ENCODE measurements at regions of chr16 and their contacts with region 1.

Region 1: DNA sequence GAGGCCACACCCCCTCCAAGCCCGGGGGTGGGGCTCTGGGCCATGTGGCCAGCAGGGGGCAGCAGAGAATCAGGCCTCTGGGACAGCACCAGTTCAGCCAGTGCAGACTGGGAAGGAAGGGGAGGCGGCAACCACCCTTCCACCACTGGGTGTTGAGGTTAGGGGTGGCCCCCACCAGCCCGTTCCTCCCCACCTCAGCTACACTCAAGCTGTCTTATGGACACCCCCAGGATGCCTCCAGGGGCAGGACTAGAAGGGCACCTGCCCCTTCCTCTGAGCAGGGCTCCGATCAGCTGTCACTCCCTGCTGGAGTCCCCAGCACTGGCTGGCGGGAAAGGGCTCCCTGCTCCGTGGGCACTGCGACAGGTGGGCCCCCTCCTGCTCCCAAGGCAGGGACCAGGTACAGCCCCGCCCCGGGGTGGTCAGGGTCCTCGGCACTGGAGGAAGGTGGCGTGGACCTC is 21.8 kb downstream of the KATNB1 start:
- DNase-seq: peak; percentile 90
- H3K4me3 ChIP-seq: no peak overlapping the region
- H3K27ac ChIP-seq: no peak overlapping the region
- H3K4me1 ChIP-seq: no peaks in the 10 kb centered on the region
- H3K27me3 ChIP-seq: no peaks in the 10 kb centered on the region
- CTCF ChIP-seq: peak; percentile 91 to 93 (median 92)
- POLR2A ChIP-seq: no peak

Region 2: GRCh38 chr16:57711346-57712026 is 45.9 kb before region 1 on chr16:
- intact Hi-C with region 1: no loop called
- DNase-seq: no peak
- H3K4me3 ChIP-seq: no peak overlapping the region
- H3K27ac ChIP-seq: no peak overlapping the region
- H3K4me1 ChIP-seq: no peaks in the 10 kb centered on the region
- H3K27me3 ChIP-seq: no peaks in the 10 kb centered on the region
- CTCF ChIP-seq: no peak
- POLR2A ChIP-seq: no peak

Region 3: DNA sequence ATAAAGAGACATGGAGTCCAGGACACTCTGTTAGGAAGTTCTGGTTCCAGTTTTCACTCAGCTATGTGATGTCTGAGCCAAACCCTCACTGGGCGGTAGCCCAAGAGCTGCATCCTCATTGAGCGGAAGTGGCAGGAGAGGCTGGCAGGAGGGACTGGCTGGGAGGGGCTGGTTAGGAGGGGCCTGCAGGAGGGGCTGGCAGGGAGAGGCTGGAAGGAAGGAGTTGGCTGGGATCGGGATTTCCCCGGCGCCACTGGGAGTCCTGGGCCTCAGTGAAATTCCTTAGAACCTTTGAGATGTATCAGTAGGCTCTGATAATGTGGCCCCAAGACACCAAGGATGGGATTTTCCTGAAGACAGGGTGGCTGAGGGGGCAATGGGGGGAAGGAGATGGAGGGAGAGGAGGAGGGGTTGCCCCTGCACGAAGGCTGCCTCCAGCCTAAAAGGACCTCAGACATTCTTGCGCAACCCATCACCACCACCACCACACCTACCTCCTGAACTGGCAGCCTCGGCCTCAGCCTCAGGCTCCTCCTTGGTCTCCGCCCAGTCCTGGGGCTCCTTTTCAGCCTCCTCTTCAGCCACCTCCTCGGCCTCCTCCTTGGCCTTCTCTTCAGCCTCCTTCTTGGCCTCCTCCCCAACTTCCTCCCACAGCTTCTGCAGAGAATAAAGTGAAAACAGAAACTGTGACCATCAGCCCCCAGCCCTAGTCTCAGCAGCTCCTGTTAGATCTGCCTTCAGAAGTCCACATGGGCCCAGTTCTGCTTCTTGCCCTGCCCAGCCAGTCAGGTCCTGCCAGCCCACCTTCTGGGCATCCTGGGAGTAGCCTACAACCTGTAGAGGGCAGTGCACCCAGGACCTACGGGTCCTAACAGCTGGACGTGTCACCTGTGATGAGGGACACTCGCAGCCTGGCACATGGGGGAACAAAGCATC is 181.8 kb after region 1 on chr16:
- intact Hi-C with region 1: no loop called
- DNase-seq: peak; percentile 52
- H3K4me3 ChIP-seq: no peak overlapping the region
- H3K27ac ChIP-seq: no peak overlapping the region
- H3K4me1 ChIP-seq: no peaks in the 10 kb centered on the region
- H3K27me3 ChIP-seq: no peaks in the 10 kb centered on the region
- CTCF ChIP-seq: peak in 1 of 3 experiments; percentile 7
- POLR2A ChIP-seq: no peak

Region 4: GRCh38 chr16:57988929-57989328 is 231.6 kb after region 1 on chr16:
- intact Hi-C with region 1: no loop called
- DNase-seq: no peak
- H3K4me3 ChIP-seq: no peak overlapping the region
- H3K27ac ChIP-seq: no peak overlapping the region
- H3K4me1 ChIP-seq: peaks cover 4% of the 10 kb centered on the region
- H3K27me3 ChIP-seq: no peaks in the 10 kb centered on the region
- CTCF ChIP-seq: no peak
- POLR2A ChIP-seq: no peak

Region 5: GRCh38 chr16:58000706-58001676 is 243.6 kb after region 1 on chr16 and contains the start of gene USB1:
- intact Hi-C with region 1: loop called (anchors 10 kb)
- DNase-seq: peak; percentile 89
- H3K4me3 ChIP-seq: peak within 1 kb of the TSS; percentile 68 to 73
- H3K27ac ChIP-seq: peak within 1 kb of the TSS; percentile 76 to 87
- H3K4me1 ChIP-seq: peaks cover 18% of the 10 kb centered on the region
- H3K27me3 ChIP-seq: no peaks in the 10 kb centered on the region
- CTCF ChIP-seq: peak; percentile 36 to 69 (median 65)
- POLR2A ChIP-seq: no peak
- total RNA-seq, gene USB1: 62.4 to 63.7 TPM